ENCODE measurements at regions of chrX and their contacts with region 1.

Region 1: DNA sequence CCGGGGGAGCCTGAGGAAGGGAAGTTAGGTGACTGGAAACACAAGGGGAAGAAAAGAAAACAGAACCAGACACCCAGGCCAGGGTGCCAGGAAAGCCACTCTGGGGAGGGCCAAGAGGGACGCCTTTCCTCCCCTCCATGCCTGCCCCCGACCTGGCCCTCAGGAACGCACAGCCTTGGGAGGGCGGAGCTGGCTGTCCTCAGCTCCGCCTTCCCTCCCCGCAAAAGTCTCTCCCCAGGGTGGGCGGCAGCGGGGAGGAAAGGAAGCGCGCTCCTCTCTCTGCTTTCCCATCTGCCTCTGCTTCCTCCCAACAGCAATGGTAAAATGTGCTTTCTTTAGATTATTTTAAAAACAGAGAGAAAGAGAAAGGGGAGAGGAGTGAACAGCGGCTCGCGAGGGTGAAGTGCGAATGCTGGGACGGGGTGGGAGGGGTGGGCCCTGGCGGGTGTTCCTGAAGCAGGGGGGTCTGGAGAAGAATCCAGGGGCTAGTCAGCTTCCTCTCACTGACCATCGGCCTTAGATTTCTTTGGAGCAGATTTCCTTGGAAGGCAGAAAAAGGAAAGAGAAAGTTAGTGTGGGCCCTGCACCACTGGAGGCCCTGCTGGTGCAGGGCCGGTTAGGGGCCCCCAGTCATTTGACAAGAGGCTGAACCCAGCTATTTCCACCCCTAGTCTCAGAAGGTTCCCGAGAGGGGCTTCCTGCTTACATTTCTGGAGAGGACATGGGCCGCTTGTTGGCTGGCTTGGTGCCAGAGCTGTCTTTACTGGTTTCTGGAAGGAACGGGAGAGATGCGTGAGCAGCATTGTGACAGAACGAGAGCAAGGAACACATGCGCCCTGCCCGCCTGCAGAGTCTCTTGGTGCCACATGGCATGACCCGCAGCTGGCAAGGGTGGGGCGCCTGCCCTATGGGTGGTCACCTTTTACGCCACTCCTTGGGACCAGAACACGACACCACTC is 4.7 kb upstream of the RENBP start:
- DNase-seq: no peak
- H3K4me3 ChIP-seq: no peak overlapping the region
- H3K27ac ChIP-seq: peak overlapping the region; percentile 28
- H3K4me1 ChIP-seq: no peaks in the 10 kb centered on the region
- H3K27me3 ChIP-seq: no peaks in the 10 kb centered on the region
- CTCF ChIP-seq: no peak
- POLR2A ChIP-seq: no peak

Region 2: GRCh38 chrX:153763989-153764755 is 185.0 kb before region 1 on chrX and contains the start of gene PLXNB3:
- intact Hi-C with region 1: loop called (anchors 2 kb)
- DNase-seq: no peak
- H3K4me3 ChIP-seq: peak within 1 kb of the TSS; percentile 18 to 28
- H3K27ac ChIP-seq: peak within 1 kb of the TSS; percentile 38
- H3K4me1 ChIP-seq: peaks cover 30% of the 10 kb centered on the region
- H3K27me3 ChIP-seq: no peaks in the 10 kb centered on the region
- CTCF ChIP-seq: peak; percentile 67 to 75 (median 70)
- POLR2A ChIP-seq: no peak
- total RNA-seq, gene PLXNB3: 36.1 TPM

Measured in vagina (tissue), 2 donors.